ENCODE measurements at regions of chr2 and their contacts with region 1.

Region 1: GRCh38 chr2:226649871-226650660 is 149.6 kb downstream of the IRS1 start:
- DNase-seq: peak in 5 of 9 donors; percentile 21 to 45 (median 37)
- ATAC-seq: peak; percentile 62
- H3K4me3 ChIP-seq: no peak overlapping the region
- H3K4me3 Mint-ChIP-seq: peak overlapping the region in 9 of 10 donors; percentile 8 to 61 (median 51)
- H3K27ac ChIP-seq: no peak overlapping the region
- H3K27ac Mint-ChIP-seq: peak overlapping the region in 8 of 9 donors; percentile 48 to 97 (median 78)
- H3K4me1 ChIP-seq: peaks cover 0 to 9% of the 10 kb centered on the region in 2 donors
- H3K4me1 Mint-ChIP-seq: peaks cover 5 to 55% (median 23%) of the 10 kb centered on the region in 7 donors
- H3K27me3 ChIP-seq: no peaks in the 10 kb centered on the region
- H3K27me3 Mint-ChIP-seq: peaks cover 0 to 18% (median 0%) of the 10 kb centered on the region in 5 donors

Region 2: DNA sequence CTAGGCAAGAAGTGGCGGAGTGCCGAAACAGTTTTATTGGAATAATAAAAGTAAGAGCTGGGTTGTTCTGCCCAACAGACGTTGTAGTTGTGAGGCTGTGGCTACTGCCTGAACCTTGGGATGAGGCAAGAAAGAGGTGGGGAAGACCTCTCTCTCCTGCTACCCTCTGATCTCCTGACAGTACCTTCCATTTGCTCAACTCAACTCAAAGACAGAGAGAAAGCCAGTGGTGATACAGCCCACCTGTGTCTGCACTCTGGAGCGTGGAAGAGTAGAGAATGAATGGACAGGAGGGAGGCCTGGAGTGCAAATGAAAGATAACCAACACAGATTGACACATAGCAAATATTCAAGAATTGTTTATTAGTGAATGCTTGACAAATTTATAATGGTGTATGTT is 660.3 kb before region 1 on chr2:
- CTCF ChIA-PET with region 1: no interaction called
- POLR2A ChIA-PET with region 1: no interaction called
- intact Hi-C with region 1: loop called in 1 of 2 experiments (anchors 5 kb)
- DNase-seq: no peak
- ATAC-seq: no peak
- H3K4me3 ChIP-seq: no peak overlapping the region
- H3K4me3 Mint-ChIP-seq: no peak overlapping the region
- H3K27ac ChIP-seq: no peak overlapping the region
- H3K27ac Mint-ChIP-seq: no peak overlapping the region
- H3K4me1 ChIP-seq: no peaks in the 10 kb centered on the region
- H3K4me1 Mint-ChIP-seq: no peaks in the 10 kb centered on the region
- H3K27me3 ChIP-seq: no peaks in the 10 kb centered on the region
- H3K27me3 Mint-ChIP-seq: peaks cover 0 to 9% (median 0%) of the 10 kb centered on the region in 5 donors

Region 3: GRCh38 chr2:226423498-226423960 is 226.5 kb before region 1 on chr2:
- CTCF ChIA-PET with region 1: no interaction called
- POLR2A ChIA-PET with region 1: no interaction called
- intact Hi-C with region 1: loop called in 1 of 2 experiments (anchors 5 kb)
- DNase-seq: peak; percentile 16 to 58 (median 45)
- ATAC-seq: peak; percentile 91
- H3K4me3 ChIP-seq: peak overlapping the region; percentile 33
- H3K4me3 Mint-ChIP-seq: peak overlapping the region; percentile 67 to 91 (median 75)
- H3K27ac ChIP-seq: no peak overlapping the region
- H3K27ac Mint-ChIP-seq: peak overlapping the region; percentile 2 to 89 (median 26)
- H3K4me1 ChIP-seq: peaks cover 6 to 9% of the 10 kb centered on the region in 2 donors
- H3K4me1 Mint-ChIP-seq: peaks cover 11 to 22% (median 13%) of the 10 kb centered on the region in 7 donors
- H3K27me3 ChIP-seq: no peaks in the 10 kb centered on the region
- H3K27me3 Mint-ChIP-seq: peaks cover 0 to 29% (median 0%) of the 10 kb centered on the region in 5 donors

Region 4: GRCh38 chr2:226609366-226609765 is 40.7 kb before region 1 on chr2:
- CTCF ChIA-PET with region 1: interaction called, 3 read pairs
- POLR2A ChIA-PET with region 1: no interaction called
- intact Hi-C with region 1: loop called in 1 of 2 experiments (anchors 2 kb)
- DNase-seq: no peak
- ATAC-seq: no peak
- H3K4me3 ChIP-seq: no peak overlapping the region
- H3K4me3 Mint-ChIP-seq: peak overlapping the region in 2 of 10 donors; percentile 1 to 52
- H3K27ac ChIP-seq: no peak overlapping the region
- H3K27ac Mint-ChIP-seq: no peak overlapping the region
- H3K4me1 ChIP-seq: no peaks in the 10 kb centered on the region
- H3K4me1 Mint-ChIP-seq: peaks cover 0 to 25% (median 9%) of the 10 kb centered on the region in 7 donors
- H3K27me3 ChIP-seq: no peaks in the 10 kb centered on the region
- H3K27me3 Mint-ChIP-seq: peaks cover 5 to 21% (median 6%) of the 10 kb centered on the region in 5 donors

Region 5: DNA sequence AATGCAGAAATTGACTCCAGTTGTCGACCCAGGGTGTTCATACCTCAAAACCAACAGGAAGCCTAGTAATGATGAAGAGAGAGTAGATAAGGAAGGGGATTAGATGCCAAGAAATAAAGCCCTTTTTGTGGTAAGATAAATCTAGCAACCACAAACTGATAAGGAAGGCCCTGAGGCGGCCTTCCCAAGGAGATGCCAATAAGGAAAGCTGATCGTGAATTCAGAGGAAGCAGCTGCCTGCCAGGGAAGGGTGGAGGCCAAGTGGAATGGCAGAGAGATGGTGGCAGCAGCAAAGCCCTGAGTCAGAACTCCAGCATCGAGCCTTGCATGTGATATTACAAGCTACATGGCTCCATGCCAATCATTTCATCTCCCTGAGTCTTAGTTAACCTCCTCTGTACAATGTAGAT is 23.3 kb after region 1 on chr2:
- CTCF ChIA-PET with region 1: no interaction called
- POLR2A ChIA-PET with region 1: no interaction called
- intact Hi-C with region 1: no loop called
- DNase-seq: peak in 2 of 9 donors; percentile 6 to 10
- ATAC-seq: no peak
- H3K4me3 ChIP-seq: no peak overlapping the region
- H3K4me3 Mint-ChIP-seq: no peak overlapping the region
- H3K27ac ChIP-seq: no peak overlapping the region
- H3K27ac Mint-ChIP-seq: no peak overlapping the region
- H3K4me1 ChIP-seq: peaks cover 0 to 4% of the 10 kb centered on the region in 2 donors
- H3K4me1 Mint-ChIP-seq: peaks cover 0 to 7% (median 6%) of the 10 kb centered on the region in 7 donors
- H3K27me3 ChIP-seq: no peaks in the 10 kb centered on the region
- H3K27me3 Mint-ChIP-seq: peaks cover 4 to 54% (median 22%) of the 10 kb centered on the region in 5 donors

Region 6: DNA sequence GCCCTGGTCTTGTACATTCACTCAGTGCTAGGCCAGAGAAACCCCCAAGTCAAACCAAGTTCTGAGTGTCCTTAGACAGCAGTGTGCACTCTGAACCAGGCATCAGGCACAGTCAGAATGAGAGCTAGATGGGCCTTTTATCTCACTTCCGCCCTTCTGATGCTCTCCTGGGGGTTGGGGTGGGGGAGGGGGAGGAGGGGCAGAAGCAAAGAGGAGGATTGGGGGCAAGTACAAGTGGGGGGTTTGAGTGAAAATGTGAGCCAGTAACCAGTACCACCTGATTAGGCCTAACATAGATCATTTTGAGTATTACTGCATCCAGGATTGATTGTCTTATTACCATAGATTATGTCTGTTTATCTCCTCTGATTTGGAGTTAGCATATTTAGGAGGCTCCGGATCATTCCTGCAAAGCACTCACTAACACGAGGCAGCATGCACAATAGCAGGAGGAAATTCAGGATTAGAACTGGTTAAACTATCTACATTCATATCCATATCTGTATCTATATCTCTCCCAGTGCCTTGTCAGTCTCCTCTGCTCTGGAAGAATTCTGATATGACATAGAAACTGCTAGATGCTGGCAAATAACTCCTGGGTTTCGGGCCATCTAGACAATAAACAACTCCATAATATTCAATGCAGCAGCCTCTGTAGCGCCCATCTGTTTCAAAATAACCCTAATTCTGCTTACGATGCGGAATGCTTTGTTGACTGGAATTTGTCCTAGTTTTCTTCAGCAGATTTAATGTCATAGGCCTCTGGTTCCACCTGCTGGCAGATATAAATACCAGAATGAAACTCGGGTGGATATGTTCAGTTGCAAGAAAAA is 334.9 kb after region 1 on chr2:
- CTCF ChIA-PET with region 1: no interaction called
- POLR2A ChIA-PET with region 1: no interaction called
- intact Hi-C with region 1: loop called in 1 of 2 experiments (anchors 5 kb)
- DNase-seq: peak in 6 of 9 donors; percentile 9 to 48 (median 38)
- ATAC-seq: peak; percentile 58
- H3K4me3 ChIP-seq: no peak overlapping the region
- H3K4me3 Mint-ChIP-seq: peak overlapping the region in 3 of 10 donors; percentile 16 to 45 (median 20)
- H3K27ac ChIP-seq: no peak overlapping the region
- H3K27ac Mint-ChIP-seq: peak overlapping the region in 6 of 9 donors; percentile 22 to 76 (median 66)
- H3K4me1 ChIP-seq: peaks cover 0 to 7% of the 10 kb centered on the region in 2 donors
- H3K4me1 Mint-ChIP-seq: peaks cover 5 to 33% (median 26%) of the 10 kb centered on the region in 7 donors
- H3K27me3 ChIP-seq: no peaks in the 10 kb centered on the region
- H3K27me3 Mint-ChIP-seq: no peaks in the 10 kb centered on the region